ENCODE measurements at regions of chr15 and their contacts with region 1.

Region 1: GRCh38 chr15:33344111-33344510 is 33.3 kb downstream of the RYR3 start:
- DNase-seq: peak; percentile 30
- ATAC-seq: peak; percentile 92
- H3K4me3 ChIP-seq: no peak overlapping the region
- H3K27ac ChIP-seq: no peak overlapping the region
- H3K4me1 ChIP-seq: peaks cover 5% of the 10 kb centered on the region
- H3K27me3 ChIP-seq: no peaks in the 10 kb centered on the region
- CTCF ChIP-seq: no peak
- EP300 ChIP-seq: peak in 1 of 2 experiments; percentile 22; a peak in 1 of 4 replicates
- POLR2A ChIP-seq: no peak
- RAD21 ChIP-seq: no peak

Region 2: GRCh38 chr15:33322091-33322490 is 22.0 kb before region 1 on chr15:
- CTCF ChIA-PET with region 1: interaction called, 4 read pairs
- POLR2A ChIA-PET with region 1: interaction called, 6 read pairs
- RAD21 ChIA-PET with region 1: interaction called, 13 read pairs
- SMC1A ChIA-PET with region 1: interaction called, 20 read pairs
- in situ Hi-C with region 1: no loop called
- intact Hi-C with region 1: no loop called
- DNase-seq: no peak
- ATAC-seq: no peak
- H3K4me3 ChIP-seq: no peak overlapping the region
- H3K27ac ChIP-seq: no peak overlapping the region
- H3K4me1 ChIP-seq: peaks cover 4% of the 10 kb centered on the region; the same call in 1 of the 2 replicates
- H3K27me3 ChIP-seq: peaks cover 0 to 5% of the 10 kb centered on the region in 2 experiments; a peak in 3 of 4 replicates
- CTCF ChIP-seq: no peak
- EP300 ChIP-seq: no peak
- POLR2A ChIP-seq: no peak
- RAD21 ChIP-seq: no peak

Measured in GM12878 (cell line).